ENCODE measurements at regions of chr5 and their contacts with region 1.

Region 1: DNA sequence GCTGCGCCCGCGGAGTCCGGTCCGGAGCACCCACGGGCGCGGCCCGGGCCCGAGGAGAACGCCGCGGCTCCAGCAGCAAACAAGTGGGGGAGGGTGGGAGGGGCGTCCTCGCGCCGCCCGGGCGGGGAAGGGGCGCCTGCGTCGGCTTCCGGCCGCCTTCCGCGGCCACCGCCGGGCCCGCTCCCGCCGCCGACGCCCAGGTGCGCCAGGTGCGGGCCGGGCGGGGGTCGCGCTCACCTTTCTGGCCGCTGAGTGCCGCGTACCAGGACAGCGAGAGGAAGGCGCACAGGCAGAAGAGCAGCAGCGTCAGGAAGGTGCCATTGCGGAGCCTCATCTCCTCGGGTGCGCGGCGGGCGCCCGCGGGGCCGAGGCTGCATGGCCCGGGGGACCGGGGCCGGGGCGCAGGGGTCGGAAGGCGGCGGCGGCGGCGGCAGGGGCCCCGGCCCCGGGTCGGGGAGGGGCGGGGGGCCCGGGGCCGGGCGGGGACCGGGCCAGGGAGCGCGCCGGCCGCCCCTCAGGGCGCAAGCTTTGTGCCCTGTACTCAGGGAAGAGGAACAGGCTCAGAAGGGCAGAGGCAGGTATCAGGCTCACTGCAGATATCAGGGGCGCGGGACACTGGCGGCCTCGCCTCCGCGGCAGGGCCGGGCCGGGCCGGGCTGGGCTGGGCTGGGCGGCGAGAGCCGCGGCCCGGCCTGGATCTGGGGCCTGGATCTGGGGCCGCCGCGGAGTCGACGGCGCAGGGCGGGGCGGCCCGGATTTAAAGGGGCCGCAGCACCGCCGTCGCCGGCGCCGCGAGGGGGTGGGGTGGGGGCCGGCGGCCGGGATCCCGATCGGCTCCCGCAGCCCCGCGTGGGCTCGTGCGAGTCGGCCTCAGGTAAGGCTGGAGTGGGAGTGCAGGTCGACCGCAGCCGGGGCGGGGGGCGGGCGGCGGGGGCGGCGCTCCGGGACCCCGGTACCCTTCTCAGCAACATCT is at the start of gene MGAT4B:
- DNase-seq: peak; percentile 82
- ATAC-seq: peak; percentile 65
- H3K4me3 Mint-ChIP-seq: peak within 1 kb of the TSS; percentile 82
- H3K27ac Mint-ChIP-seq: peak within 1 kb of the TSS; percentile 25
- H3K4me1 Mint-ChIP-seq: peaks cover 36% of the 10 kb centered on the region
- H3K27me3 Mint-ChIP-seq: no peaks in the 10 kb centered on the region
- total RNA-seq, gene MGAT4B: 52.4 to 62.8 TPM

Region 2: GRCh38 chr5:179079165-179079987 is 727.2 kb before region 1 on chr5:
- CTCF ChIA-PET with region 1: no interaction called
- POLR2A ChIA-PET with region 1: no interaction called
- intact Hi-C with region 1: no loop called
- DNase-seq: no peak
- ATAC-seq: no peak
- H3K4me3 Mint-ChIP-seq: no peak overlapping the region
- H3K27ac Mint-ChIP-seq: no peak overlapping the region
- H3K4me1 Mint-ChIP-seq: no peaks in the 10 kb centered on the region
- H3K27me3 Mint-ChIP-seq: no peaks in the 10 kb centered on the region

Region 3: DNA sequence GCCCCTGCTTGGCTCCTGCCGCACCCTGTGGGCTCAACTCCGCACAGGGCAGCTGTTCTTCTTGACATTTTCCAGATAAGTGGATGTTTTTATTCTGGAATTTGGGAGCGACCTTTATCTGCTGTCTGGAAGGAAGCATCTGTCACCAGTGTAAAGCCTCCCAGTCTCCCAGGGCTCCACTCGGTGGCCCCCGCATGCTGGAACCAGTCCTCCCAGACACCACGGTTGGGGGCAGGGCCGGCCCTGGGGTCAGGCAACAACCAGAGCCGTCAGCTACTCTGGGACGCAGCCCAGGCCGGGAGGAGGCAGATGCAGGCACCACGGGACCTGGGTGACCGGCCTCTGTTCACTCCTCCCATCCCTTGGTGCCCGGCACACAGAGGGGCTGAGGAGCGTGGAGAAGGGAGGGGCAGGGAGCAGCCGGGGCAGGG is 368.5 kb before region 1 on chr5:
- CTCF ChIA-PET with region 1: no interaction called
- POLR2A ChIA-PET with region 1: no interaction called
- intact Hi-C with region 1: no loop called
- DNase-seq: no peak
- ATAC-seq: no peak
- H3K4me3 Mint-ChIP-seq: no peak overlapping the region
- H3K27ac Mint-ChIP-seq: no peak overlapping the region
- H3K4me1 Mint-ChIP-seq: no peaks in the 10 kb centered on the region
- H3K27me3 Mint-ChIP-seq: peaks cover 8% of the 10 kb centered on the region

Region 4: GRCh38 chr5:179550511-179551230 is 255.9 kb before region 1 on chr5 and contains the start of gene RUFY1:
- CTCF ChIA-PET with region 1: no interaction called
- POLR2A ChIA-PET with region 1: no interaction called
- intact Hi-C with region 1: loop called in 1 of 2 experiments (anchors 5 kb)
- DNase-seq: peak; percentile 89
- ATAC-seq: peak; percentile 80
- H3K4me3 Mint-ChIP-seq: peak within 1 kb of the TSS; percentile 96
- H3K27ac Mint-ChIP-seq: peak within 1 kb of the TSS; percentile 99
- H3K4me1 Mint-ChIP-seq: peaks cover 37% of the 10 kb centered on the region
- H3K27me3 Mint-ChIP-seq: no peaks in the 10 kb centered on the region
- total RNA-seq, gene RUFY1: 29.6 to 33.8 TPM

Region 5: GRCh38 chr5:179732417-179732917 is 74.1 kb before region 1 on chr5 and contains the start of gene MAML1:
- CTCF ChIA-PET with region 1: interaction called, 3 read pairs
- POLR2A ChIA-PET with region 1: interaction called, 3 read pairs
- intact Hi-C with region 1: loop called in 1 of 2 experiments (anchors 2 kb)
- DNase-seq: peak; percentile 99
- ATAC-seq: peak; percentile 95
- H3K4me3 Mint-ChIP-seq: peak within 1 kb of the TSS; percentile 92
- H3K27ac Mint-ChIP-seq: peak within 1 kb of the TSS; percentile 94
- H3K4me1 Mint-ChIP-seq: peaks cover 43% of the 10 kb centered on the region
- H3K27me3 Mint-ChIP-seq: no peaks in the 10 kb centered on the region
- total RNA-seq, gene MAML1: 25.4 to 32.6 TPM

Region 6: GRCh38 chr5:179795863-179796833 is 10.4 kb before region 1 on chr5:
- CTCF ChIA-PET with region 1: interaction called, 6 read pairs
- POLR2A ChIA-PET with region 1: no interaction called
- intact Hi-C with region 1: loop called in 1 of 2 experiments (anchors 1 kb)
- DNase-seq: peak; percentile 87
- ATAC-seq: peak; percentile 80
- H3K4me3 Mint-ChIP-seq: peak overlapping the region; percentile 64
- H3K27ac Mint-ChIP-seq: no peak overlapping the region
- H3K4me1 Mint-ChIP-seq: peaks cover 25% of the 10 kb centered on the region
- H3K27me3 Mint-ChIP-seq: no peaks in the 10 kb centered on the region

Region 7: DNA sequence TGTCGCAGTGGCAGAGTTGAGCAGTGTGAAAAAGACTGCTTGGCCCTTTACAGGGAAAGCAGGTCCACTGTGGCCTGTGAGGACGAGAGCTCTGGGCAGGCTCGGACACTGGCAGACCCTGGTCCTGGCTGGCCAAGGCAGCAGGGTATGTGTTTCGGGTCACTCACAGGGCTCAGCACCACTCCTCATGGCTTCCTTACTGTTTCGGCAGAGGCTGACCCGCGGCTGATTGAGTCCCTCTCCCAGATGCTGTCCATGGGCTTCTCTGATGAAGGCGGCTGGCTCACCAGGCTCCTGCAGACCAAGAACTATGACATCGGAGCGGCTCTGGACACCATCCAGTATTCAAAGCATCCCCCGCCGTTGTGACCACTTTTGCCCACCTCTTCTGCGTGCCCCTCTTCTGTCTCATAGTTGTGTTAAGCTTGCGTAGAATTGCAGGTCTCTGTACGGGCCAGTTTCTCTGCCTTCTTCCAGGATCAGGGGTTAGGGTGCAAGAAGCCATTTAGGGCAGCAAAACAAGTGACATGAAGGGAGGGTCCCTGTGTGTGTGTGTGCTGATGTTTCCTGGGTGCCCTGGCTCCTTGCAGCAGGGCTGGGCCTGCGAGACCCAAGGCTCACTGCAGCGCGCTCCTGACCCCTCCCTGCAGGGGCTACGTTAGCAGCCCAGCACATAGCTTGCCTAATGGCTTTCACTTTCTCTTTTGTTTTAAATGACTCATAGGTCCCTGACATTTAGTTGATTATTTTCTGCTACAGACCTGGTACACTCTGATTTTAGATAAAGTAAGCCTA is 29.9 kb after region 1 on chr5:
- CTCF ChIA-PET with region 1: interaction called, 4 read pairs
- POLR2A ChIA-PET with region 1: no interaction called
- intact Hi-C with region 1: loop called (anchors 1 to 5 kb)
- DNase-seq: peak; percentile 79
- ATAC-seq: peak; percentile 98
- H3K4me3 Mint-ChIP-seq: no peak overlapping the region
- H3K27ac Mint-ChIP-seq: peak overlapping the region; percentile 89
- H3K4me1 Mint-ChIP-seq: peaks cover 19% of the 10 kb centered on the region
- H3K27me3 Mint-ChIP-seq: no peaks in the 10 kb centered on the region

Region 8: GRCh38 chr5:179907570-179908324 is 101.2 kb after region 1 on chr5 and contains the start of gene TBC1D9B:
- CTCF ChIA-PET with region 1: interaction called, 7 read pairs
- POLR2A ChIA-PET with region 1: no interaction called
- intact Hi-C with region 1: loop called (anchors 1 to 2 kb)
- DNase-seq: peak; percentile 82
- ATAC-seq: peak; percentile 90
- H3K4me3 Mint-ChIP-seq: peak within 1 kb of the TSS; percentile 92
- H3K27ac Mint-ChIP-seq: peak within 1 kb of the TSS; percentile 83
- H3K4me1 Mint-ChIP-seq: peaks cover 13% of the 10 kb centered on the region
- H3K27me3 Mint-ChIP-seq: no peaks in the 10 kb centered on the region
- total RNA-seq, gene TBC1D9B: 103 to 121 TPM

Region 9: DNA sequence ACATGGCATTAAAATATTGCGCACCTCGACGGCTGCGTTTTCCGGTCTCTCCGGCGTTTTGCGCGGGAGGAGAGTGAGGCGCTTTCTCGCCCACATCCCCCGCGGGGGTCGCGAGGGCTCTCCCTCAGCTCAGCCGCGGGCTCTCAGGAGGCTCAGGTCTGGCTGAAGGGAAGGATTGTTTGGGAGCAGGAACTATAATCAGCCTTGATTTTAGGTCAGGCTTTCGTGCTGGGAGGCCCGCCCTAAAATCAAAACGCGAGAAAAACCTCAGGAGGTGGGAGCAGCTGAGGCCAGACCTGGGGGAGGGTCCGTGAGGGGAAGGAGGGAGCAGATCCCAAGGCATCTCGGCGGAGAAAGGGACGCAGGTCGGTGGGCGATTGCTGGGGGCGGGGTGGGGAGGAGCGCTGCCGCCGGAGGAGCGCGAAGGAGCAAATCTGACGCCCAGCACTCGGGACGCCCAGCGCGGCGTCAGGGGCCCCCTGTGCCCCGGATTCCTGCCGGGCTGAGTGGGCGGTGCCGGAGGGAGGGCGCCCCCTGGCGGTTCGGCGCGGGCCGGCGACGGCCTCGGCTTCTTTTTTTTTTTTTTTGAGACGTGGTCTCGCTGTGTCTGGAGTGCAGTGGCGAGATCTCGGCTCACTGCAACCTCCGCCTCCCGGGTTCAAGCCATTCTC is 283.7 kb after region 1 on chr5:
- CTCF ChIA-PET with region 1: interaction called, 5 read pairs
- POLR2A ChIA-PET with region 1: no interaction called
- intact Hi-C with region 1: loop called (anchors 1 to 5 kb)
- DNase-seq: peak; percentile 89
- ATAC-seq: peak; percentile 85
- H3K4me3 Mint-ChIP-seq: peak overlapping the region; percentile 74
- H3K27ac Mint-ChIP-seq: peak overlapping the region; percentile 67
- H3K4me1 Mint-ChIP-seq: peaks cover 24% of the 10 kb centered on the region
- H3K27me3 Mint-ChIP-seq: no peaks in the 10 kb centered on the region

Region 10: DNA sequence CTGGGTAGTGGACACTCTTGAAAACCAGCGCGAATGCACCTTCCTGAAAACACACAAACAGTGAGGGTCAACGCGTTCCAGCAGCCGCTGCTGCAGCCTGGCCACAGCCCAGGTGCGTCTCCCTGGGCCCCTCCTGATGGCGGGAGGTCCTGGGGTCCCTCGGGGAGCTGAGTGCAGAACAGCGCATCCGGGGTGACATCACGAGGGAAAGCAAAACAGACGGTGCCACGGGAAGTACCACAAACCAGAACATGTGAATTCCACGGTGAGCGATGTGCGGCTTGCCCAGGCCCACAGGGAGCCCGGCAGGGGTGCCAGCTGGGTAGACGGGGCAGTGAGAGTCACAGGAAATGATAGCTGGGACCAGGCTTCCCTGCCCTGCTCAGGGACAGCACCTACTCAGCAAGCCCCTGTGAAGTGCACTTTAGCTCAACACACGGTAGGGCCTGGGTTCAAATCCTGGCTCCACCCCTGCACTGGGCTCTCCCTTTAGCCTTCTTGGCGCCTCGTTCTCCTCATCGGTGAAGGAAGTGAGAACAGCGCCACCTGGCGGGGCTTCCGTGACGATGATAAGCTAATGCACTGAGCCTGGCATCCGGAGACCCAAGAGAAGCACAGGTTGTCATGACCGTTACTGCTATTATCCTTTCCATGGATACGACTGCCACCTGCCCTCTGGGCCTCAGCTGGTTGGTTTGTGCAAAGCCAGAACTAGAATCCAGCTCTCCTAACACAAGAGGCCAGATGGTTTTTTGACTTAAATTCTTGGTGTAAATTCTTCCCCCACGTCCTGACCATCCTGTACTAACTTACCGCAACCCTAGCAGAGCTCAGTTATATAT is 522.0 kb after region 1 on chr5:
- CTCF ChIA-PET with region 1: no interaction called
- POLR2A ChIA-PET with region 1: no interaction called
- intact Hi-C with region 1: no loop called
- DNase-seq: peak; percentile 93
- ATAC-seq: peak; percentile 98
- H3K4me3 Mint-ChIP-seq: no peak overlapping the region
- H3K27ac Mint-ChIP-seq: no peak overlapping the region
- H3K4me1 Mint-ChIP-seq: no peaks in the 10 kb centered on the region
- H3K27me3 Mint-ChIP-seq: peaks cover 9% of the 10 kb centered on the region

Region 11: DNA sequence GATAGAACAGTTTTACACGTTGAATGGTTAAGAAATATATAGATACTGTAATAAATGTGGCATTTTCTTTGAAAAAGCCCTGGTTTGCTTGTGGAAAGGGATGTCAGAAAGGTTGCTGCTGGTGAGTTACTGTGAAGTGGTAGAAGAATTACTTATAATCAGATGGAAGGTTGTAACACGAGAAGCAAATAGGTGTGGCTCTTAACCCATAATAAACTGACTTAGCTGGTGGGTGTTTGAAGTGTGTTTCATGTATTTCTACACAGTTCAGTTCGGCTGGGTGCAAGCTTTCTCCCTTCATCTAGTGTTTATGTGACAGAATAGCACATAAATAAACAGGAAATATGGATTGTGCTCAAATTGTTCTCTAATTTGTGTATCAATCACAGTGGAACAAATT is 693.1 kb after region 1 on chr5:
- CTCF ChIA-PET with region 1: no interaction called
- POLR2A ChIA-PET with region 1: no interaction called
- intact Hi-C with region 1: no loop called
- DNase-seq: no peak
- ATAC-seq: no peak
- H3K4me3 Mint-ChIP-seq: no peak overlapping the region
- H3K27ac Mint-ChIP-seq: no peak overlapping the region
- H3K4me1 Mint-ChIP-seq: peaks cover 36% of the 10 kb centered on the region
- H3K27me3 Mint-ChIP-seq: no peaks in the 10 kb centered on the region

Measured in activated CD4-positive, alpha-beta T cell treated with anti-CD3 and anti-CD28 coated beads for 36 hours (primary cell).